Dendritic cell treated with granulocyte-macrophage colony-stimulating factor and Interleukin-4, amounts not matched to agents 40 ng/mL and 50 ng/mL, for 4 days (primary cell): ENCODE measurements at regions of chr16 and their contacts with region 1.

Region 1: GRCh38 chr16:30355144-30355894 is at the start of gene CD2BP2:
- H3K4me3 Mint-ChIP-seq: peak within 1 kb of the TSS; percentile 95
- H3K27ac Mint-ChIP-seq: peak within 1 kb of the TSS; percentile 99
- H3K4me1 Mint-ChIP-seq: peaks cover 57% of the 10 kb centered on the region
- H3K27me3 Mint-ChIP-seq: no peaks in the 10 kb centered on the region

Region 2: DNA sequence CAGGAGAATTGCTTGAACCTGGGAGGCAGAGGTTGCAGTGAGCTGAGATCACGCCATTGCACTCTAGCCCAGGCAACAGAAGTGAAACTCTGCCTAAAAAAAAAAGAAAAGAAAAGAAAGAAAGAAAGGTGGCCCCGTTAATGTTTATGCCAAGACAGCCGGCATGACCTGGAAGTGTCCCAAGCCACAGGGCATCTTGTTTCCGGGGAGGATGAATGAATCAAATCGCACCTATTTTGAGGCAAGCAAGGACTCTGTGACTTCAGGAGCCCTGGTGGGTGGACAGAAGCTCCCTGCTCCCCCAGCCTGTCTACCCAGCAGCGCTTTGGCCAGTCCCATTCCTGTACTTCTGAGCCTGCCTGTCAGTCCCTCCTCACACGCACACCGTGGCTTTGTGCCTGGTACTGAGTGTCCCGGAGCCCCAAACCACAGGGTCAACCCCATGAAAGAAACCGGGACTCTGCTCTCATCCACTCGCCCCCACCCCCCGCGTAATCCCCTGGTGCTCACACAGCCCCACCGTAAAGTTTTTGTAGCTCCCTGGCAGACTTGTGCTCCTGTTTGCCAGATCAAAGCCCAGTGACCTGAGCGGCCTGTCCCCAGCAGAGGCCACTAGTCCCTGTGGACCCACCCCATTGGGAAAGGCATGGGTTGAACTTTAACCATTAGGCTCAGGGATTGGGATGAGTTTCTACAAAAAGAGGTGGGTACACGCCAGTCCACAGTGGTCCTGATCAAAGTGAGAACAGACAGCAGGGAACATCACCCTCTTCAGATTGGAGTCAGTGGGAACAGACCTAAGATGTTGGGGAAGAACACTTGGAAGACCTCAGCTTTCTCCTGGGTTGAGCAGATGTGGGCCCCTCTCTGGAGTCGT is 19.5 kb before region 1 on chr16:
- intact Hi-C with region 1: loop called (anchors 2 kb)
- H3K4me3 Mint-ChIP-seq: peak overlapping the region; percentile 80
- H3K27ac Mint-ChIP-seq: peak overlapping the region; percentile 92
- H3K4me1 Mint-ChIP-seq: peaks cover 20% of the 10 kb centered on the region
- H3K27me3 Mint-ChIP-seq: no peaks in the 10 kb centered on the region

Region 3: GRCh38 chr16:30370444-30371247 is 15.3 kb after region 1 on chr16 and contains the start of gene TBC1D10B:
- intact Hi-C with region 1: loop called (anchors 2 kb)
- H3K4me3 Mint-ChIP-seq: peak within 1 kb of the TSS; percentile 89
- H3K27ac Mint-ChIP-seq: peak within 1 kb of the TSS; percentile 97
- H3K4me1 Mint-ChIP-seq: peaks cover 43% of the 10 kb centered on the region
- H3K27me3 Mint-ChIP-seq: no peaks in the 10 kb centered on the region

Region 4: DNA sequence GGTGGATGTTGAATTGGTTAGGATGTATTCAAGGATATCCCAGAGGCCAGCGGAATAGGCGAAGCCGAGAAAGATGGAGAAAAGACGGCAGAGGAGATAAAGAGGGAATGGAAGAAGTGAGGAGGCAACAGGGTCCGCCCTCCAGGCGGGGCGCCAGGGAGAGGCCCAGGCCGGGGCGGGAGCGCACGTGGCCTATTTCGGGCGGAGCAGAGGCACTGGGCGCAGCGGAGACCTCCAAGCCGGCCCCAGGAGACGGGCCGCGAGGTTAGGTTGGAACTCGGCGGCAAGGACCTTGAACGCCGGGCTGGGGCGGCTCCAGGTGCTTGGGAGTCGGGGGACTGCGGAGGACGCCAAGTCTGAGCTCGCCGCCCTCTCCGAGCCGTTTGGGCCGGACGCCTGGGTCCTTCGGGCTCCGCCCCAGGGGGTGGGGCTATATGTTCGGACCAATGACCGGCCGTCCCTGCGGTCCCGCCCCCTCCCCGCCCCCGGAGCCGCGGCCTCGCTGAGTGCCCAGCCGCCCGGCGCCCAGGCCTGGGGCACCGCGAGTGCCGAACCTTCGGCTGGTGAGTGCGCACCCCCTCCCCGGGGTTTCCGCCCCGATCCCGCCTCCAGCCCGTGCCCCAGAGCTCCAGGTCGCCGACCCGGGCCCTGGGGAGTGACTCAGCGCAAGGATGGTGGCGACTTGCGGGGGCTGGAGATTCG is 51.9 kb after region 1 on chr16 and contains the start of gene ZNF771:
- intact Hi-C with region 1: loop called (anchors 5 kb)
- H3K4me3 Mint-ChIP-seq: peak within 1 kb of the TSS; percentile 79
- H3K27ac Mint-ChIP-seq: peak within 1 kb of the TSS; percentile 59
- H3K4me1 Mint-ChIP-seq: peaks cover 50% of the 10 kb centered on the region
- H3K27me3 Mint-ChIP-seq: peaks cover 1% of the 10 kb centered on the region

Region 5: DNA sequence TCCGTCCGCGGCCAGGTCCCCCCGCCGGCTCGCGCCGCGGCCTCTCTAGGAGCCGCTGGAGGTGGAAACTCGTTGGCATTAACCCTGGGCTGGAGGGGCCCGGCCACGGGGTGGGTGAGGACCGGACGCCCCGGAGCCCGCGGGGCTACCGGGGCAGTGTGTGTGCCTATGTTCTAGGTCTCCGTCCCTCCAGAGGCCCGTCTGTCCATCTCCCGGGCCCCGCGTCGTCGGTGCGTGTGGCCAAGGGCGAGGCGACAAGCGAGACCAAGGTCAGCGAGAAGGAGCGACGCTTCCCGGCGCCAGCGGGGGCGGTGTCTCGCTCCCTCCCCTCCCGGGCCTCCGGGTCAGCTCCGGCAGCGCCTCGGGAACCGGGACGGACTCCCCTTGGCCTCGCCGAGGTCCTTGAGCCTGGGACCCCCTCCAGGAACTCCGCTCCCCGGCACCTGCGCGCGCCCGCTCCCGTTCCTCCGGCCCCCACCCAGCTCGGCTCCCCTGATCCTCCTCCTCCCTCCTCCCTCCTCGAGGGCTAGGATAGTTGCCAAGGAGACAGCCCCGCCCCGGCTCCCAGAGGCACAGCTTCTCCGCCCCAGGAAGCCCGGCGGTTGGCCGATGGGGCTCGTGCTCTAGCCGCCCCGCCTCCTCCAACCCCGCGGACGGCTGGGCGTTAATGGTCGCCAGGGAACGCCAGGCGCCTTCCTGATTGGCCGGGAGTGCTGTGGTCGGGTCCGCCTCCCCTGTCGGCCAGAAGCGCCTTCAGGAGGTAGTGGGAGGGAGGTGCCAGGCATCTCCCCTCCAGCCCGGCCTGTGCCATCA is 171.7 kb after region 1 on chr16:
- intact Hi-C with region 1: loop called (anchors 2 kb)
- H3K4me3 Mint-ChIP-seq: peak overlapping the region; percentile 76
- H3K27ac Mint-ChIP-seq: peak overlapping the region; percentile 99
- H3K4me1 Mint-ChIP-seq: peaks cover 67% of the 10 kb centered on the region
- H3K27me3 Mint-ChIP-seq: no peaks in the 10 kb centered on the region

Region 6: GRCh38 chr16:30588651-30589050 is 233.3 kb after region 1 on chr16:
- intact Hi-C with region 1: no loop called
- H3K4me3 Mint-ChIP-seq: no peak overlapping the region
- H3K27ac Mint-ChIP-seq: no peak overlapping the region
- H3K4me1 Mint-ChIP-seq: peaks cover 12% of the 10 kb centered on the region
- H3K27me3 Mint-ChIP-seq: no peaks in the 10 kb centered on the region

Region 7: DNA sequence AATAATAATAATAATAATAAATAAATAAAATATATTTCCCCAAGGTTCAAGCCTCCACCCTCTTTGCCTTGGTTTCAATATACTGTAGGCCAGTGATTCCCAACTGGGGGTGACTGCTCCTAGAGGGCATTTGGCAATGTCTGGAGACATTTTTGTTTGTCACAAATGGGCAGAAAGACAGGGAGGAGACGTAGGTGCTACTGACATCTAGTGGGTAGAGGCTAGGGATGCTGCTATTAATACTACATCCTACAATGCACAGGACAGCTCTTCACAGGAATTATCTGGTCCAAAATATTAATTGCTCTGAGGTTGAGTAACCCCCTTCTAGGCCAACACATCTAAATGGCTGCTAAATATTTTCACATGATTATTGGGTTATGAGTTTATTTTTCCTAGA is 282.6 kb after region 1 on chr16:
- intact Hi-C with region 1: no loop called
- H3K4me3 Mint-ChIP-seq: no peak overlapping the region
- H3K27ac Mint-ChIP-seq: peak overlapping the region; percentile 20
- H3K4me1 Mint-ChIP-seq: peaks cover 13% of the 10 kb centered on the region
- H3K27me3 Mint-ChIP-seq: peaks cover 2% of the 10 kb centered on the region